ENCODE measurements at regions of chr15 and their contacts with region 1.

Region 1: DNA sequence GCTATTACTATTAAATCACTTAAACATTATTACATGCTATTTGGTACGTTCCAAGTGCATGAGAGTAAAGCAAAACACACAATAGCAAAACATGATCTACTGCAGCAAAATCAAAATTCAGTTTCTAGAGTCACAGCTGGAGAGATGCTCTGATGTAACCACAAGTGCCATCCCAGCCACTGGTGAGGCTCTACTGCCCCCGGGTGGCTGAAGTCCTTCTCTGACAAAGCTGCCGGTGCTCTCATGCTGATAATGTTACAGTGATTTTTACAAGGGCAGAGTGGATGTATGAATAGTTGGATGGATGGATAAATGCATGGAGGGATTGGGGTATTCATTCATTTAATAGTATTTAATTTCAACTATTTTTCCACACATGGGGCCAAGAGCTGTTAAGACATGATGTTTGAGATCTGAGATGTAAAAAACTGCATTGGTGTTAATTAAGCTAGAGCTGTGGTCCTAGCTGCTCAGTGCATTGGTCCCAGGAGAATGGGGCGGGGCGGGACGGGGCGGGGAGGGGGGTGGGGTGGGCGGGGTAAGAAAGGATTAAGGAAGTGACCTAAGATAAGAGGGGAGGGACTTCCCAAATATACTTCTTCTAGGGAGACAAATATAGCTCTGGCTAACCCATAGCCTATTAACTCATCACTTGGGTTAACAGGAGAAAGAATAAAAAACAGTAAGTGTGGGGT is 5.3 kb upstream of the SPESP1 start:
- DNase-seq: peak; percentile 84
- ATAC-seq: peak; percentile 75
- H3K4me3 Mint-ChIP-seq: no peak overlapping the region
- H3K27ac Mint-ChIP-seq: no peak overlapping the region
- H3K4me1 Mint-ChIP-seq: no peaks in the 10 kb centered on the region
- H3K27me3 Mint-ChIP-seq: peaks cover 22% of the 10 kb centered on the region

Region 2: GRCh38 chr15:68550481-68551295 is 374.3 kb before region 1 on chr15:
- CTCF ChIA-PET with region 1: interaction called, 19 read pairs
- POLR2A ChIA-PET with region 1: no interaction called
- intact Hi-C with region 1: loop called (anchors 1 to 5 kb)
- DNase-seq: peak; percentile 89
- ATAC-seq: no peak
- H3K4me3 Mint-ChIP-seq: no peak overlapping the region
- H3K27ac Mint-ChIP-seq: no peak overlapping the region
- H3K4me1 Mint-ChIP-seq: peaks cover 6% of the 10 kb centered on the region
- H3K27me3 Mint-ChIP-seq: peaks cover 29% of the 10 kb centered on the region

Region 3: GRCh38 chr15:68559345-68560310 is 365.4 kb before region 1 on chr15:
- CTCF ChIA-PET with region 1: interaction called, 15 read pairs
- POLR2A ChIA-PET with region 1: no interaction called
- intact Hi-C with region 1: loop called (anchors 1 to 5 kb)
- DNase-seq: peak; percentile 86
- ATAC-seq: peak; percentile 90
- H3K4me3 Mint-ChIP-seq: peak overlapping the region; percentile 69
- H3K27ac Mint-ChIP-seq: no peak overlapping the region
- H3K4me1 Mint-ChIP-seq: peaks cover 14% of the 10 kb centered on the region
- H3K27me3 Mint-ChIP-seq: peaks cover 47% of the 10 kb centered on the region

Region 4: GRCh38 chr15:68672781-68673205 is 252.2 kb before region 1 on chr15:
- CTCF ChIA-PET with region 1: interaction called, 8 read pairs
- POLR2A ChIA-PET with region 1: no interaction called
- intact Hi-C with region 1: loop called in 1 of 2 experiments (anchors 1 kb)
- DNase-seq: no peak
- ATAC-seq: no peak
- H3K4me3 Mint-ChIP-seq: no peak overlapping the region
- H3K27ac Mint-ChIP-seq: no peak overlapping the region
- H3K4me1 Mint-ChIP-seq: peaks cover 4% of the 10 kb centered on the region
- H3K27me3 Mint-ChIP-seq: peaks cover 9% of the 10 kb centered on the region

Region 5: DNA sequence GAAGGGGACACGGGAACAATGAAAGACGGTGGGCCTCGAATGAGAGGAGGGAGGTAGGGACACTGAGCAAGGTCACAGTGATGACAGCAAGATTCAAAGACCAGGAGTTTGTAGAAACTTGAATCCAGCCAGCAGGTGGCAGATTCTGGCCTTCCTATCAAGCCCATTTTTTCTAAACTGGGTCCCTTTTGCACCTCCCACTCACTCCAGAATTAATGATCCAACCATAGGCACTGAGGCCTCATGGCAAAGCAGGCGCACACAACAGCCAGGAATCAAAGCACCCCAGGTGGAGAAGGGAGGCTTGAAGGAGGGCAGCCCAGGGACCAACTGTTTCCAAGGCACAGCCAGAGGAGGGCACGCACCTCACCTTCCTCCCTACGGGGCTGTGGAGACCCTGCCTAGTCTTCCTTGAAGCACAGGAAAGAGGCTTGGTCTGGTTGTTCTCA is 194.5 kb before region 1 on chr15:
- CTCF ChIA-PET with region 1: interaction called, 4 read pairs
- POLR2A ChIA-PET with region 1: no interaction called
- intact Hi-C with region 1: loop called in 1 of 2 experiments (anchors 1 kb)
- DNase-seq: peak; percentile 43
- ATAC-seq: no peak
- H3K4me3 Mint-ChIP-seq: no peak overlapping the region
- H3K27ac Mint-ChIP-seq: no peak overlapping the region
- H3K4me1 Mint-ChIP-seq: no peaks in the 10 kb centered on the region
- H3K27me3 Mint-ChIP-seq: peaks cover 4% of the 10 kb centered on the region

Region 6: DNA sequence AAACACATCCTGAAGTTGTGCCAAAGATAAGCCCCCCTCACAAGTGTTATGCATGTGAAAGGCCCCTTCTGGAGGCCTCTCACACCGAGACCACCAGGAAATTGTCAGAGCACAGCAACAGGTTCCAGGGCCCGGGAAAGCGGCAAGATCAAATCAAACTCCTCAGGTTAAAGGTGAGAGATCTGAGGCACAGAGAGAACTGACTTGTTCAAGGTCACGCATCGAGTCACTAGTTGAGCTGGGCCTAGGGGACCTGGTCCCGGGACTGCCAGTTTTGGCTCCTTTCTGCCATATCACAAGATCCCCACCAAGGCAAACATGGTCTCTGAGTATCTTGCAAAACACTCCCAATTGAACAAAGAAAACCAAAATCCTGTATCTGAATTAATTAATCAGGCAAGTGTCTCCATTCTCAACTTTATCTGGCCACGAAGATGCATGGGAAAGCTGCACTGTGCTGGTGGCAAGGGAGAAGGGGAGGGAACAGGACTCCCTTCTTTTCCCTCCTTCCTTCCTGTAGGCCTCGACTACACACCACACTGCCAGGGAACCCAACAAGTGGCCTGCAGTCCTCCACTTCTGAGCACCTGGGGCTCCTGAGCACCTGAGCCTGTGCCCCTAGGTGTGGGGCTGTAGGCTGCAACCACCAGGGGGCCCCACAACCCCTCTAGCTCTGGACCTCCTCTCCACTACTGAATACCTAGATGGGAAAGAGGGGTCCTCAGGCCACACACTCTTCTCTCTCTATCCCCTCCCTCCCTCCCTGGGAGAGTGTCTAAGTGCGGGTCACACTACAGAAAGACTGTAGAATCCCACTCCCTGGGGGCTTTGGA is 141.6 kb before region 1 on chr15:
- CTCF ChIA-PET with region 1: interaction called, 5 read pairs
- POLR2A ChIA-PET with region 1: no interaction called
- intact Hi-C with region 1: loop called in 1 of 2 experiments (anchors 5 kb)
- DNase-seq: peak; percentile 78
- ATAC-seq: peak; percentile 52
- H3K4me3 Mint-ChIP-seq: peak overlapping the region; percentile 27
- H3K27ac Mint-ChIP-seq: peak overlapping the region; percentile 86
- H3K4me1 Mint-ChIP-seq: peaks cover 33% of the 10 kb centered on the region
- H3K27me3 Mint-ChIP-seq: no peaks in the 10 kb centered on the region

Region 7: DNA sequence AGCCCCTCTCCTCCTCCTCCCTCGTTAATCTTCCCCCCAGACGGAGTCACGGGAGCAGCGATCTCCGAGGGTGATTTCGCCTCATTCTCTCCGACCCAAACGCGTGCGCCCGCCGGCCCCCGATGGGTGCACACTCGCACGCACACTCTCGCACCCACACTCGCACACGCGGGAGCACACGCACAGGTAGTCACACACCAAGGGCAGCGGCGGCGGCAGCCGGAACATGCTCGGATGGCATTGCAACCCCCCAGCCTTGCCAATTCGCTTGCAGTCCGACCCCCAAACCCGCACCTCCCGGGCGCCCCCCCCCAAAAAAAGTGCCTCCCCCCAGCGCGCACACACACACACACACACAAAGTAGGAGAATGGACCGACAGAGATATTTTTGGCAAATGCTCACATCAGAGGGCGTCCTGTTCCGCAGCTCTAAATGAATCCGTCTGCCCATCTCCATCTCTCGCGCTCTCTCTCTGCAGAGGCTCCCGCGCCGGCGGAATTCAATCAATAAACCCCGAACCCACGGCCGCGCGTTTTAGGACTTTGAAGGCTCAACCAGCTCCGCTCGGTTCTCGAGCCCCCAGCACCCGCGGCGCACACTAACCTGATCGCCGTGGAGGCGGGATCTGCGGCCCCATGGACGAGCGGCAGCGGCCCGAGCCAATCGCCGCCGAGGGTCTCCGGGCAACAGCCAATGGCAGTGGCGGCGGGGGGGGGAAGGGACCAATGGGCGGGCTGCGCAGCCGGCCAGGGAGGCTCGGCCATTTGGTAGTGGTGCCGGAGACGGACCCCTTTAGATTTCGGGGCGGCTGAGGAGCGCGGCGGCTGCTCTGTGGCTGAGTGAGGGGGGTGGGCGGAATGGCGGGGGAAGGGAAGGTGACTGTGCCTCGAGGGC is 104.5 kb before region 1 on chr15 and contains the start of gene ANP32A:
- CTCF ChIA-PET with region 1: no interaction called
- POLR2A ChIA-PET with region 1: no interaction called
- intact Hi-C with region 1: no loop called
- DNase-seq: peak; percentile 98
- ATAC-seq: peak; percentile 76
- H3K4me3 Mint-ChIP-seq: peak within 1 kb of the TSS; percentile 99
- H3K27ac Mint-ChIP-seq: peak within 1 kb of the TSS; percentile 98
- H3K4me1 Mint-ChIP-seq: peaks cover 26% of the 10 kb centered on the region
- H3K27me3 Mint-ChIP-seq: no peaks in the 10 kb centered on the region
- total RNA-seq, gene ANP32A: 252 to 439 TPM

Region 8: GRCh38 chr15:68939221-68939900 is 14.3 kb after region 1 on chr15:
- CTCF ChIA-PET with region 1: interaction called, 10 read pairs
- POLR2A ChIA-PET with region 1: no interaction called
- intact Hi-C with region 1: no loop called
- DNase-seq: no peak
- ATAC-seq: no peak
- H3K4me3 Mint-ChIP-seq: no peak overlapping the region
- H3K27ac Mint-ChIP-seq: no peak overlapping the region
- H3K4me1 Mint-ChIP-seq: no peaks in the 10 kb centered on the region
- H3K27me3 Mint-ChIP-seq: peaks cover 12% of the 10 kb centered on the region

Measured in activated CD4-positive, alpha-beta T cell treated with anti-CD3 and anti-CD28 coated beads for 36 hours (primary cell).